ENCODE measurements at regions of chr12 and their contacts with region 1.

Region 1: DNA sequence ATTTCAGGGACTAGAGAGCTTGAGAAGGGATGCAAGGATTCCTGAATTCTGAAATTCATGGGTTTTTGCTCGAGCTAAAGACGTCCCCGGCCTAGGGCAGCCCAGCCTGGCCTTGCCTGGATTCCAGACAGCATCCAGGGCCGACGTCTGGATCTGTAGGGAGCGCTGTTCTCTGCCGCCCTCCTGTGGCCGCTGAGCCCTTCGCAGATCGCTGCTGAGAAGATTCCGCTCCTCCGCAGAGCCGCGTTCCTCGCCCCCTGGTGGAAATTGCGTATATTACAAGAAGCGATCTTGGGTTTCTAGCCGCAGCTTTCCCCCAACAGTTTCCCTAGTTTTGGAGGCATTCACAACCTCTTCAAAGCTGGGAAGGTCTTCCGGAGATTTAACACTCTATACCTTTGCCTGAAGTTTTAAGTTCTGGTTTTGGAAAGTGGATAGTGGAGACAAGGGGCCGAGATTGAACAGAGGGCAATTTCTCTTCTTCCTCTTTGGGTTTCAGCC is 5.1 kb downstream of the CISTR start:
- DNase-seq: peak; percentile 89
- H3K4me3 ChIP-seq: no peak overlapping the region
- H3K27ac ChIP-seq: no peak overlapping the region
- H3K4me1 ChIP-seq: no peaks in the 10 kb centered on the region
- H3K27me3 ChIP-seq: peaks cover 61 to 89% of the 10 kb centered on the region in 2 experiments
- CTCF ChIP-seq: peak; percentile 100
- POLR2A ChIP-seq: no peak

Region 2: GRCh38 chr12:53123578-53124351 is 622.9 kb before region 1 on chr12:
- CTCF ChIA-PET with region 1: no interaction called
- POLR2A ChIA-PET with region 1: no interaction called
- dilution Hi-C with region 1: no loop called
- intact Hi-C with region 1: no loop called
- DNase-seq: no peak
- H3K4me3 ChIP-seq: no peak overlapping the region
- H3K27ac ChIP-seq: no peak overlapping the region
- H3K4me1 ChIP-seq: no peaks in the 10 kb centered on the region
- H3K27me3 ChIP-seq: peaks cover 3 to 5% of the 10 kb centered on the region in 2 experiments
- CTCF ChIP-seq: no peak
- POLR2A ChIP-seq: no peak

Region 3: GRCh38 chr12:53596920-53597363 is 149.7 kb before region 1 on chr12:
- CTCF ChIA-PET with region 1: interaction called, 3 read pairs
- POLR2A ChIA-PET with region 1: no interaction called
- dilution Hi-C with region 1: no loop called
- intact Hi-C with region 1: loop called (anchors 5 kb)
- DNase-seq: peak; percentile 92
- H3K4me3 ChIP-seq: no peak overlapping the region
- H3K27ac ChIP-seq: peak overlapping the region; percentile 54
- H3K4me1 ChIP-seq: peaks cover 40% of the 10 kb centered on the region
- H3K27me3 ChIP-seq: no peaks in the 10 kb centered on the region
- CTCF ChIP-seq: no peak
- POLR2A ChIP-seq: no peak

Region 4: GRCh38 chr12:53701518-53702260 is 45.0 kb before region 1 on chr12:
- CTCF ChIA-PET with region 1: interaction called, 719 read pairs
- POLR2A ChIA-PET with region 1: no interaction called
- dilution Hi-C with region 1: no loop called
- intact Hi-C with region 1: loop called (anchors 1 kb)
- DNase-seq: peak; percentile 69
- H3K4me3 ChIP-seq: no peak overlapping the region
- H3K27ac ChIP-seq: no peak overlapping the region
- H3K4me1 ChIP-seq: no peaks in the 10 kb centered on the region
- H3K27me3 ChIP-seq: peaks cover 57 to 72% of the 10 kb centered on the region in 2 experiments
- CTCF ChIP-seq: peak; percentile 95 to 96
- POLR2A ChIP-seq: no peak

Region 5: GRCh38 chr12:53717319-53717718 is 29.3 kb before region 1 on chr12:
- CTCF ChIA-PET with region 1: interaction called, 22 read pairs
- POLR2A ChIA-PET with region 1: no interaction called
- dilution Hi-C with region 1: no loop called
- intact Hi-C with region 1: no loop called
- DNase-seq: no peak
- H3K4me3 ChIP-seq: no peak overlapping the region
- H3K27ac ChIP-seq: no peak overlapping the region
- H3K4me1 ChIP-seq: no peaks in the 10 kb centered on the region
- H3K27me3 ChIP-seq: no peaks in the 10 kb centered on the region
- CTCF ChIP-seq: no peak
- POLR2A ChIP-seq: no peak

Region 6: DNA sequence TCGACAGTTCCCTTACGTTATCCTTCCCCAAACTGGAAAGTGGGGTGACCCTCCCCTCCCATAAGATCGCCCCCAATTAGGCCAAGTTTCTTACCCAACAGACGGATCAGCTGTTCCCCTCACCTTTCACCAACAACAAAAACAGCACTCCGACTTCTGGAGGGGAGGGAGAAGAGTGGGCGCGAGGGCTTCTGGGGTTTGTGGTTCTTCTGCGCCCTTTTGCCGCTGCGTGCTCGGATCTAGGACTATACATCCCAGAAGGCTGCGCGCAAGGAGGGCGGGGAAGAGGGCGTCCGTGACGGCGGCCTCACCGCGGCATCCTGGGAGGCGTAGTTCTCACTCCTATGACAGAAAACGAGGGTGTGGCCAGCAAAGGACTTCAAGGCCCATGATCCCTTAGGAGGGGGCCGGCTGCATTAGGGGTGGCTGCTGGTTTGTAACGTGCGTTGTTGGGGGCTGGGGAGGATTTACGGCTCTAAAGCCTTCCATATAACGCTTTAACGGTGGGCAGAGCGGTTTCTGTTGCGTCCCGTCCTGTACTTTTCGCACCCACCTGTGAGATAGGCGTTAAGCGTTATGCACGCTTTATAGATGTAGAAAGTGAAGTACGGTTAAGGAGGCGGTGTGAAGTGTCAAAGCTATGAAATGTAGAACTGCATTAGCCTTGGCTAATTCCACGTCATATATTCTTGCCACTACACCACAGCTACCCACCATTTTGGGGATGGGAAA is 19.2 kb before region 1 on chr12 and contains the start of gene CALCOCO1:
- CTCF ChIA-PET with region 1: interaction called, 127 read pairs
- POLR2A ChIA-PET with region 1: no interaction called
- dilution Hi-C with region 1: no loop called
- intact Hi-C with region 1: loop called (anchors 2 kb)
- DNase-seq: peak; percentile 100
- H3K4me3 ChIP-seq: peak within 1 kb of the TSS; percentile 44 to 85 (median 56)
- H3K27ac ChIP-seq: peak within 1 kb of the TSS; percentile 4
- H3K4me1 ChIP-seq: peaks cover 14% of the 10 kb centered on the region
- H3K27me3 ChIP-seq: peaks cover 4 to 8% of the 10 kb centered on the region in 2 experiments
- CTCF ChIP-seq: no peak
- POLR2A ChIP-seq: peak; percentile 73
- total RNA-seq, gene CALCOCO1: 61.8 and 70.9 TPM in 2 replicates

Region 7: GRCh38 chr12:53757095-53757770 is 10.6 kb after region 1 on chr12:
- CTCF ChIA-PET with region 1: interaction called, 69 read pairs
- POLR2A ChIA-PET with region 1: no interaction called
- dilution Hi-C with region 1: no loop called
- intact Hi-C with region 1: no loop called
- DNase-seq: peak; percentile 63
- H3K4me3 ChIP-seq: no peak overlapping the region
- H3K27ac ChIP-seq: no peak overlapping the region
- H3K4me1 ChIP-seq: peaks cover 3% of the 10 kb centered on the region
- H3K27me3 ChIP-seq: peaks cover 55 to 64% of the 10 kb centered on the region in 2 experiments
- CTCF ChIP-seq: peak; percentile 80 to 96
- POLR2A ChIP-seq: no peak

Measured in endothelial cell of umbilical vein (primary cell).